ENCODE measurements at regions of chr12 and their contacts with region 1.

Region 1: GRCh38 chr12:94922561-94922960 is 80.9 kb downstream of the NDUFA12 start:
- DNase-seq: no peak
- ATAC-seq: no peak
- H3K4me3 ChIP-seq: no peak overlapping the region
- H3K4me3 Mint-ChIP-seq: no peak overlapping the region
- H3K27ac ChIP-seq: no peak overlapping the region
- H3K27ac Mint-ChIP-seq: peak overlapping the region in 1 of 9 donors; percentile 58
- H3K4me1 ChIP-seq: no peaks in the 10 kb centered on the region
- H3K4me1 Mint-ChIP-seq: no peaks in the 10 kb centered on the region
- H3K27me3 ChIP-seq: no peaks in the 10 kb centered on the region
- H3K27me3 Mint-ChIP-seq: no peaks in the 10 kb centered on the region

Region 2: DNA sequence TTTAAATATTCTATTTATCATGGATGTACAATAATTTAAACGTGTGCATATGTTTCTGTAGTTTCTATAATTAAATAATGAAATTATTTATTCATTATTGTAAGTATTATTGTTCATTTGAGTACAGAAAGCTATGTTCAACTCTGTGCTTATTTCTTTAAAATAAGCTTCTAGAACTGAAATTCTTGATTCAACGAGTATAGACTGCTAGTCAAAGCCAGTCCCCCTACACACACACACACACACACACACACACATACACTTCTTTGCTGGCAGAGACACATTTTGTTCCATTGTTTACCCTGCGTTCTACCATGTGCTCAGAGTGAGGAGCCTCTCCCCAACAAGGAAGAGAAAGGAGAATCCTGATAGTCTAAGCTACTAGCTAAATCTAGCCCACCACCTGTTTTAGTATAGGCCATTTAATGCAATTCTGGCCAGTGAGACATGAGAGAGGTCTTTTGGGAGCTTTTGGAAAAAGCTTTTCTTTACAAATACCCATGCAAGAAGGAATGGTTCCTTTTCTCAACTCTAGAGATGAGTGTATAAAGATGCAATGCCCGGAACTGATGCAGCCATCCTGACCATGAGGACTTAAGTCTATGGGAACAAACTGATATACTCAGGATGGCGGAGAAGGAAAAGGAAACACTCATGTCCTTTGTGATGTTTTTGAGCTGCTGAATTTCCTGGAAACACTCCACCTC is 80.5 kb before region 1 on chr12:
- CTCF ChIA-PET with region 1: no interaction called
- POLR2A ChIA-PET with region 1: no interaction called
- intact Hi-C with region 1: loop called in 1 of 2 experiments (anchors 2 kb)
- DNase-seq: no peak
- ATAC-seq: no peak
- H3K4me3 ChIP-seq: no peak overlapping the region
- H3K4me3 Mint-ChIP-seq: no peak overlapping the region
- H3K27ac ChIP-seq: no peak overlapping the region
- H3K27ac Mint-ChIP-seq: no peak overlapping the region
- H3K4me1 ChIP-seq: no peaks in the 10 kb centered on the region
- H3K4me1 Mint-ChIP-seq: no peaks in the 10 kb centered on the region
- H3K27me3 ChIP-seq: no peaks in the 10 kb centered on the region
- H3K27me3 Mint-ChIP-seq: peaks cover 4 to 18% (median 4%) of the 10 kb centered on the region in 5 donors

Measured in naive thymus-derived CD4-positive, alpha-beta T cell (primary cell).